ENCODE measurements at regions of chr10 and their contacts with region 1.

Region 1: DNA sequence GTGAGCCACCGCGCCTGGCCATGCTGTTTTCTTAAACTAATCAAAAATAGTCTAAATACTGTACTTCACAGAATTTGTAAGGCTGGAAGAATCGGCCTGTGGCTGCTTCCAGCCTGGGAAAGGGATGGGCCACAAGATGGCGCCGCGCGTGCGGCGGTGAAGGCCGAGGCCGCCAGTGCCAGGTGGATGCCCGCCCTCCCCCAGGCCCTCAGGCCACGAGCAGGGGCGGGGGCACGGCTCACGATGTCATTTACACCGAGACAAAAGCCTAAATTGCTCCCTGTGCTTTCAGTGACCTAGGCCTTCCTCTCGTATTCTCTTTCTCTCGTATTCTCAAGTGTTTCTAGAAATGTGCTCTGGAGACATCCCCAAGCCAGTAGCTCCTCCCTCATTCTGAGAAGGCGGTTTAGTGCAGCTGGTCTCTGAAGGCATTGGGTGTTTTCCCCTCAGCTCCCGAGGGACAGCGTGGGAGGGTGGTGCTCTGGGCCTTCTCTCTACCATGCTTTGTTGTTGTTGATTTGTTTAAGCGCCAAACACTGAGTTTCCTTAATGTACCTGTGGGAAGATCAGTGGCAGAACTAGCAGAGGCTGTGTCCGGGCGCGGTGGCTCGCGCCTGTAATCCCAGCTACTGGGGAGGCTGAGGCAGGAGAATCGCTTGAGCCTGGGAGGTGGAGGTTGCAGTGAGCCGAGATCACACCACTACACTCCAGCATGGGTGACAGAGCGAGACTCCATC is 68.4 kb downstream of the CDC123 start:
- DNase-seq: peak; percentile 77
- H3K4me3 ChIP-seq: peak overlapping the region; percentile 58
- H3K27ac ChIP-seq: peak overlapping the region; percentile 69
- H3K4me1 ChIP-seq: peaks cover 14% of the 10 kb centered on the region
- H3K27me3 ChIP-seq: no peaks in the 10 kb centered on the region
- CTCF ChIP-seq: peak; percentile 91

Region 2: DNA sequence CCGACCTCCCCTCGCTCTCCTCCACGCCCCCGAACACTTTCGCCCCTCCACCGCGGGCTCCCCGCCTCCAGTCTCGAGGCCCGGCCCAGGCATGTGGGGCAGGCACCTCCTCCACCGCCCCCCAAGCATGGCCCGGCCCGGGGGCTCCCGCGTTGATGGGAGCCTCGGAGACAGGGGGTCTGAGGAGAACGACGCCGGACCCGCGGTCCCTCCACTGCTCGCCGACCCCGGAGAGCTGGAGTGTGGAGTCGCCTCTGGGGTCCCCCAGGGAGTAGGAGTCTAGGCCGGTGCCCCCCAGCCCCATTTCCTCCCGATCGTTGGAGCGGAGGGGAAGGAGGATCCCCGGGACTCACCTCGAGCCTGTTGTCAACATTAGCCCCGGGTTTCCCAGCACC is 222.0 kb before region 1 on chr10:
- intact Hi-C with region 1: no loop called
- DNase-seq: no peak
- H3K4me3 ChIP-seq: peak overlapping the region; percentile 99
- H3K27ac ChIP-seq: peak overlapping the region; percentile 99
- H3K4me1 ChIP-seq: peaks cover 29% of the 10 kb centered on the region
- H3K27me3 ChIP-seq: no peaks in the 10 kb centered on the region
- CTCF ChIP-seq: no peak

Region 3: DNA sequence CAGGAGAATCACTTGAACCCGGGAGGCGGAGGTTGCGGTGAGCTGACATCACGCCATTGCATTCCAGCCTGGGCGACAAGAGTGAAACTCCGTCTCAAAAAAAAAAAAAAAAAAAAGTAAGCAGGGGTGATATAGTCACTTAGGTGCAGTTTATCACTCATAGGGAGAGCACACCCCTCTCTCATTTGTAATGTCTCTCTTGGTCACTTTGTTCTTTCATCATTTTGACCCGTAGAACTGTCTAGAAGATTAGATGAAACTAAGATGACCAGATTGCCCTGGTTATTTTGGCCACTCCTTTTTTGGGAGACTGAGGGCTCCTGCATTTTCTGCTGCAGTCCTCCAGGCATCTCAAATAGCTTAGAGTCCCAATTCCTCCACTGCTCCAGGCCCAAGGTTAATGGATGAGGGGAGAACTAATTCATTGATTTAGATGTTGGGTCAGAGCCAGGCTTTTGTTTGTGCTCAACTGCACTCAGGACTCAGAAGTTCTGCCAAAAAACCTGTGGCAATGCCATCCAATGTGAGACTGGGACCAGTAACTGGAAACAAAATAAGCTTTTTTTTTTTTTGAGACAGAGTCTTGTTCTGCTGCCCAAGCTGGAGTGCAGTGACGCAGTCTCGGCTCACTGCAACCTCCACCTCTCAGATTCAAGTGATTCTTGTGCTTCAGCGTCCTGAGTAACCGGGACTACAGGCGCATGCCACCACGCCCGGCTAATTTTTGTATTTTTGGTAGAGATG is 35.0 kb after region 1 on chr10:
- intact Hi-C with region 1: no loop called
- DNase-seq: no peak
- H3K4me3 ChIP-seq: no peak overlapping the region
- H3K27ac ChIP-seq: no peak overlapping the region
- H3K4me1 ChIP-seq: no peaks in the 10 kb centered on the region
- H3K27me3 ChIP-seq: peaks cover 6% of the 10 kb centered on the region
- CTCF ChIP-seq: no peak

Region 4: GRCh38 chr10:12656518-12657142 is 392.3 kb after region 1 on chr10:
- intact Hi-C with region 1: loop called (anchors 10 kb)
- DNase-seq: no peak
- H3K4me3 ChIP-seq: no peak overlapping the region
- H3K27ac ChIP-seq: no peak overlapping the region
- H3K4me1 ChIP-seq: no peaks in the 10 kb centered on the region
- H3K27me3 ChIP-seq: no peaks in the 10 kb centered on the region
- CTCF ChIP-seq: peak; percentile 80

Region 5: DNA sequence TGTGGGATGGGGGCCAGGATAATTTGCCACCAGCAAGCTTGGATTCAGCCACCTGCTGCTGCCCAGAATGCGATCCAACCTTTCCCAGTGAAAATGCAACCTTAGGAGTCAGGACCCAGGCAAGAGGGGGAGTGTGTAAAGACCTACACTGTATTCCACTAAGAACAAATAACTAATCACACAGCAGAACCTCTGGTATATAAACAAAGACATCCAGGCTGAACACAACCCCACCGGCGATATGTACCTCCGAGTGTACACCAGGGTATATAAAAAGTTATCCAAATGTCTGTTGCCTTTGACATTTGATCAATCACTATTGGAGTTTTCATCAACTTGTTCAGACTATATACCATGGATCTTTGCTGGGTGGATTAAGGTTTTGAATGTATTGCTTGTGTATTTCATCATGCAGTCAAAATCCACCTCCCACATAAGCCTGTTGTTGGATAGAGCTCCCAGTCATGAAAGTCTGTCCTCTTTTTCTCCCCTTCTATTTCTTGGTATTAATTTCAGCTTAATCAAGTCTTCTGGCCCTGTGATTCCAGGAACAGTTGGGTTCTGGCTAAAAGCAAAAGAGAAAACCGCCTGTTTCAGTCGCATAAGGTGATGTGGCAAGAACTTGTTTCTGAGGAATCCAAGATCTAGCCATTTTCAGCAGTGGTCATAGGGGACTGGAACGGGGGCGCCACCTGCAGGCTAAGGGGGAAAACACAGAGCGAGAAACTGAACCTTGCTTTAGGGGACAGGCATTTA is 446.4 kb after region 1 on chr10:
- intact Hi-C with region 1: loop called (anchors 5 kb)
- DNase-seq: peak; percentile 74
- H3K4me3 ChIP-seq: no peak overlapping the region
- H3K27ac ChIP-seq: no peak overlapping the region
- H3K4me1 ChIP-seq: peaks cover 40% of the 10 kb centered on the region
- H3K27me3 ChIP-seq: no peaks in the 10 kb centered on the region
- CTCF ChIP-seq: peak; percentile 95

Region 6: GRCh38 chr10:13238271-13239073 is 974.1 kb after region 1 on chr10:
- intact Hi-C with region 1: no loop called
- DNase-seq: no peak
- H3K4me3 ChIP-seq: no peak overlapping the region
- H3K27ac ChIP-seq: no peak overlapping the region
- H3K4me1 ChIP-seq: no peaks in the 10 kb centered on the region
- H3K27me3 ChIP-seq: peaks cover 25% of the 10 kb centered on the region
- CTCF ChIP-seq: no peak

Measured in left ventricle myocardium inferior (tissue), 1 donor.